Motor neuron (in vitro differentiated cells): ENCODE measurements at regions of chr7 and their contacts with region 1.

Region 1: GRCh38 chr7:46352004-46352954 is 431.2 kb upstream of the IGFBP3 start:
- ATAC-seq: peak in 6 of 8 experiments; percentile 42 to 74 (median 53)
- H3K4me3 ChIP-seq: no peak overlapping the region
- H3K27ac ChIP-seq: no peak overlapping the region
- H3K4me1 ChIP-seq: no peaks in the 10 kb centered on the region

Region 2: GRCh38 chr7:45917658-45918057 is 434.6 kb before region 1 on chr7:
- in situ Hi-C with region 1: loop called in 3 of 9 experiments (anchors 5 to 25 kb)
- ATAC-seq: peak in 4 of 8 experiments; percentile 13 to 72 (median 40)
- H3K4me3 ChIP-seq: no peak overlapping the region
- H3K27ac ChIP-seq: no peak overlapping the region
- H3K4me1 ChIP-seq: no peaks in the 10 kb centered on the region

Region 3: DNA sequence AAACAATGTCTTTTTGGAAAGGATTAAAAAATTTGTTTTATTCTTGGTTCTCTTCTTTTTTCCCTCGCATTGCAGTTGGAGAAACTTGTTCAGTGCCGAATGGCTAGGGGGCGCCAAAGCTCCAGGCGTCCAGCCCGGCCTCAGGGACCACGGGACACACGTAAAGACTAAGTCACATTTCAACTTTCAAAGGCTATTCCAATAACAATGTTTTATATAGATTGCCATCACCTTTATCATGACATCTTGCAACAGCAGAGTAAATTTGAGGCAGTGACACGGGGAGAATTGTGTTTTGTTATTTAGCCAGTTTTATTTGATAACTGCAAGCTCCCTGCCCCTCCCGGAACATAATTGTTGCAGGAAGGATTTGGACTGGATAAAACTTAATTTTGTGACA is 429.0 kb before region 1 on chr7:
- in situ Hi-C with region 1: loop called in 5 of 9 experiments (anchors 5 to 25 kb)
- ATAC-seq: peak in 3 of 8 experiments; percentile 8 to 42 (median 19)
- H3K4me3 ChIP-seq: no peak overlapping the region
- H3K27ac ChIP-seq: no peak overlapping the region
- H3K4me1 ChIP-seq: no peaks in the 10 kb centered on the region

Region 4: DNA sequence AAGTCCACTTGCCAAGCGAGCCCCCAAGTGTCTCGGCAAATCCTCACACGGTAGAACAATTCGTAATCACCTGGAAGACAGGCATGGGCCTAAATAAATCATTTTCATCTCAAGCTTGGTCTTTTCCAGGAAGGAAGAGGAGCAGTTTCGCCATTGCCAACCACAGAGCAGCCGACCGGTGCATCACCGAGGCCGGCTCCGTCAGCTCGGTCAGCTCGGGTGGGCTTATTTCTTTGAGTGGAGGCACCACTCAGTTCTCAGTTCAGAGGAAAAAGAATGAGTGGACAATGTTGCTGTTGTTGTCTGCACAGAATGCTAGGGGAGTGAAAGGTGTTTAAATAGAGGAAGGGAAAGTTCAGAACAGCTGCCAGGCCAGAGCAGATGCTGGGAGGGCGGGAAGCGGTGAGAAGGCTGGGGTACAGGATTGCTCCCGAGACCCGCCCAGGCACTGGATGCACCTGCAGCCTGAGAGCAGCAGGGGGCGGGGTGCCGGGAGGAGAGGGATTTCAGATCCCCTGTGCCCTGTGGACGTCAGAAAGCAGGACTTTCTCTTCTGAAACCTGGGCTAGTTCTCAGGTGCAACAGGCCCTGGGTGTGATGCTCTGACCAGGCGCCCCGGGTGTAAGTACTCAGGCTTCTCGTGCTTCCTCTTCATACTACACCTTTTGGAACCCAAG is 413.5 kb before region 1 on chr7:
- in situ Hi-C with region 1: loop called in 2 of 9 experiments (anchors 25 kb)
- ATAC-seq: no peak
- H3K4me3 ChIP-seq: no peak overlapping the region
- H3K27ac ChIP-seq: no peak overlapping the region
- H3K4me1 ChIP-seq: no peaks in the 10 kb centered on the region

Region 5: DNA sequence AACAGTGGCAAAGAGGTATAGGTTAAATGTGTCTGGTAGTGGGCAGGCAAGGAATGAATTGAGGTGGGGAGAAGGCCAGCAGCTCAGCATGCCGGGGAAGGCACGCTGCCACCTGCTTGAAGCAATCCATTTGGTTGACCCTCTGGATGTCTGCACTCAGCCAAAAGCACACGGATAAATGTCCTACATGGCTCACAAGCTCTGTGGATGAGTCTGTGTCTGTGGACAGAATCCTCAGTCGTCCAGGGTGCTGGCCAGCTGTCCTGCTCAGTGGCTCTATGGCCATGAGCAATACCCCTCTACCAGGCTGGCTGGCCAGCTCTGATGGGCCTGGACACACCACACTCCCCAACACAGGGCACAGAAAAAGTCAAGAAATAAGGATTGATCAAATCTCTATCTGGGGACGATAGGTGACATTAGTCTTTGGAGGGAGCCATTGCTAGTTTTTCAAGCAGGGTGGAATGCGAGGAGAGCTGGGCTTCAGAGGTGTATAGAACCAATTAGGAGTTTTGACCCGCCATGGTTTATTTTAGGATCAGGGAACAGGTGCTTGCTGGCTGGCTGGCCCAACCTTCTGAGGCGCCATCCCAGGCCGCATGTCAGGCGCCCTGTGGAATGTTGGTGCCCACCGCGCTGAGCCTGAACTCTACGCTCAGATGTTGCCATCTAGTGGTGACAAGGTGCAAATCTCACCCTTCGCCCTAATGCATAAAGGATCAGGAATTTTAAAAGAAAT is 736.2 kb after region 1 on chr7:
- in situ Hi-C with region 1: loop called in 1 of 9 experiments (anchors 25 kb)
- ATAC-seq: peak; percentile 72 to 96 (median 78)
- H3K4me3 ChIP-seq: no peak overlapping the region
- H3K27ac ChIP-seq: no peak overlapping the region
- H3K4me1 ChIP-seq: no peaks in the 10 kb centered on the region

Region 6: DNA sequence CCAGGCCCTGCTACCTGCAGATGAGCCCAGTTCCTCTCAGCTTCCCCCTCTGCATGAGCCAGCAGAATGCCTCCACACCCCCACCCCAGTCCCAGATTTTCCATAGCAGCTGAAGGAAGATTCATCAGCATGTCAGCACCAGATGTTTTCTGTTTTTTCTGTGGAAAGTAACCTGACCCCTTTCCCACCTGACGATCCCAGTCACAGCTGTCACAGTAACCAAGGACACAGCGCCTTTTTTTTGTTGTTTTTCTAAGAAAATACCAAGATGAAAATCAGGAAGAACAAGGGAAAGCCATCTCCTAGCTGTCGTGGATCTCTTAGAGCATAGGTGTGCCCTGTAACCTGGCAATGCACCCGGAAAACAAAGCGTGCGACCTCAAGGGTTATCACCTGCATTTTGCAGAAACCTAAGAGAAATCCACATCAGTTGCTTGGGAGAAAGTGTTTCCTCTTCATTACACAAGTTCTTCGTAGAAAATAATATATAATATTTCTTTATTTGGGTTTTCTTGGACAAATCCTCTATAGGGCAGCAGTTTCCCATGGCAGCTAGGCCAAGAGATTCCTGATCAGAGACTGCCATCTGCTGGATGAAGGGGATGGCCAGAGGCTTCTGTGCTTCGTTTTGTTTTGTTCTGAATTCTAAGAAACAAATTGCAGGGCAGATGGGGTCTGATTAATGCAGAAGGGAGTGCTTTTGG is 827.7 kb after region 1 on chr7:
- in situ Hi-C with region 1: loop called in 1 of 9 experiments (anchors 25 kb)
- ATAC-seq: peak; percentile 78 to 95 (median 86)
- H3K4me3 ChIP-seq: no peak overlapping the region
- H3K27ac ChIP-seq: no peak overlapping the region
- H3K4me1 ChIP-seq: peaks cover 5 to 7% of the 10 kb centered on the region in 2 donors